WTC11 (cell line): ENCODE measurements at regions of chr11 and their contacts with region 1.

Region 1: DNA sequence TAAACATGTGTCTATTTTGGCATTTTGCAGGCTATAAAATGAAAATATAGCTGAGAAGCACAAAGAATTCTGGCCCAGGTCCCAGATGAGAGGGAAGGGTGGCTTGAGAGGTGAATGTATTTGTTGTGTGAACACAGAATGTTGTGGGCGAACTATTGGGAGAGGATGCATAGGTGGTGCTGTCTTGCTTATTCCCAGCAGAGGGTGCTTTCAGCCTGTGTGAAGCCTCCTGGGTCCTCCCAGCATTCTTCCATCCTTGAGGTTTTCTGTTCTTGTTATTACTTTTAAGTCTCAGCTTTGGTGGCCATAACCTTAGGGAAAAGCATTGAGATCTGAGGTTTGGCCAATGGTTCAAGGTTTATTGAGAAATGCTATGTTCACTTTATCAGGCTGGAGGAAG is 108.7 kb upstream of the SNX19 start:
- DNase-seq: peak; percentile 28
- ATAC-seq: peak; percentile 97
- H3K4me3 Mint-ChIP-seq: no peak overlapping the region
- H3K27ac Mint-ChIP-seq: no peak overlapping the region
- H3K4me1 Mint-ChIP-seq: no peaks in the 10 kb centered on the region
- H3K27me3 Mint-ChIP-seq: no peaks in the 10 kb centered on the region; the same call in 1 of the 2 replicates
- CTCF ChIP-seq: peak; percentile 26; the same call in 1 of the 2 replicates

Region 2: DNA sequence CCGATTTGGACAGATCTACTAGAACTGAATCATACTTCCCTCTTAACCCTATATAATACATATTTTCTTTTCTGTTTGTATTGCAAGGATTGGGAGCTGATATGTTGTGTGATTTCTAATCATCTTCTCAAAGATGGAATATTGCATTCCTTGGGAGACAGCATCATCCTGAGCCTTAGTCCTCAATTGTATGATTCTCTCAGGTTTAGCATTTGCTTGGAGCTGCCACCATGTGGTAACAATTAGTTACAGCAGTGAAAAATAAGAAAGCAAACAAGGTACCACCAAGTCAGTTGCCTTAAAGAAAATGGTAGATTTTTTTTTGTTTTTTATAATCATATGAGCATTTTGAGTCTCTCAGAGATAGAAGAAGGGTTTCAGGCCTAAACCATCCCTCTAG is 120.6 kb before region 1 on chr11:
- CTCF ChIA-PET with region 1: no interaction called
- POLR2A ChIA-PET with region 1: no interaction called
- DNase-seq: no peak
- ATAC-seq: peak; percentile 53; the same call in 1 of the 2 replicates
- H3K4me3 Mint-ChIP-seq: no peak overlapping the region
- H3K27ac Mint-ChIP-seq: no peak overlapping the region
- H3K4me1 Mint-ChIP-seq: no peaks in the 10 kb centered on the region
- H3K27me3 Mint-ChIP-seq: no peaks in the 10 kb centered on the region
- CTCF ChIP-seq: no peak

Region 3: GRCh38 chr11:131070365-131070764 is 45.3 kb after region 1 on chr11:
- CTCF ChIA-PET with region 1: interaction called, 10 read pairs
- POLR2A ChIA-PET with region 1: no interaction called
- DNase-seq: peak; percentile 25
- ATAC-seq: peak; percentile 65
- H3K4me3 Mint-ChIP-seq: no peak overlapping the region
- H3K27ac Mint-ChIP-seq: no peak overlapping the region
- H3K4me1 Mint-ChIP-seq: peaks cover 10% of the 10 kb centered on the region
- H3K27me3 Mint-ChIP-seq: 0 out of 2 replicates have a peak, but pooled peaks cover 3% of the 10 kb centered on the region
- CTCF ChIP-seq: no peak